CD8-positive, alpha-beta memory T cell (primary cell): ENCODE measurements at regions of chr6 and their contacts with region 1.

Region 1: GRCh38 chr6:42104095-42104806 is 38.2 kb downstream of the C6orf132 start:
- DNase-seq: peak; percentile 57 to 78 (median 70)
- H3K4me3 ChIP-seq: peak overlapping the region; percentile 66
- H3K4me3 Mint-ChIP-seq: peak overlapping the region; percentile 65 to 85 (median 71)
- H3K27ac ChIP-seq: peak overlapping the region; percentile 51
- H3K27ac Mint-ChIP-seq: peak overlapping the region in 4 of 8 donors; percentile 17 to 55 (median 44)
- H3K4me1 ChIP-seq: peaks cover 6% of the 10 kb centered on the region
- H3K4me1 Mint-ChIP-seq: peaks cover 7 to 14% (median 7%) of the 10 kb centered on the region in 3 donors
- H3K27me3 ChIP-seq: no peaks in the 10 kb centered on the region
- H3K27me3 Mint-ChIP-seq: no peaks in the 10 kb centered on the region

Region 2: DNA sequence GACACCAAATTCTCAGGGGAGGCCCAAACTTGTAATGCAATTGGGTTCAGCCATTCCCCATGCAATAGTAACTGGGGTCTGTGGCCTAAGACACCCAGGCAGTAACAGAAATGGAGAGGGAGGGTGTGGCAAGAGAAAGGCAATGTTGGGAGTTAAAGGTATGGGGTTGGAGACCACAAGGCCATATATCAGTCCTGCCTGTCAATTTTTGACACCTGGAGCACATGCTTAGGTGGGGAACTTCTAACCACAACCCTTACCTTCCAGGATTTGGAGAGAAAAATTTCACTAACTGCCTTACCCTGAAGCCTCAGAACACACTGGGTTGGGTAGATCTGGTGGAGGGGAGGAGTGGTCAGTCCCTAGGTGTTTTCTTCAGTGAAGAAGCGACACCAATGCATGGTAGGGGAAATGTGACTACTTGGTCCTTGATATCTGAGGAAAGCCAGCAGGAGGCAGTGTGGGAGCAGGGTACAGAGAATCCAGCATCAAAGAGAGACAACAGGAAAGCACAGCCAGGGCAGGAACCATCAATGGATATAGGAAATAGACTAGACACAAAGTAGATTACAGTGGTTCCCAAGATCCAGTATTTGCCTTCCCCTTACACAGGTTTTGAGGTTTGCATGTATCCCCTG is 202.2 kb before region 1 on chr6:
- CTCF ChIA-PET with region 1: interaction called, 15 read pairs
- POLR2A ChIA-PET with region 1: no interaction called
- DNase-seq: peak; percentile 37 to 71 (median 51)
- H3K4me3 ChIP-seq: no peak overlapping the region
- H3K4me3 Mint-ChIP-seq: no peak overlapping the region
- H3K27ac ChIP-seq: no peak overlapping the region
- H3K27ac Mint-ChIP-seq: peak overlapping the region in 5 of 8 donors; percentile 11 to 78 (median 47)
- H3K4me1 ChIP-seq: peaks cover 13% of the 10 kb centered on the region
- H3K4me1 Mint-ChIP-seq: peaks cover 16 to 22% (median 18%) of the 10 kb centered on the region in 3 donors
- H3K27me3 ChIP-seq: no peaks in the 10 kb centered on the region
- H3K27me3 Mint-ChIP-seq: no peaks in the 10 kb centered on the region

Region 3: DNA sequence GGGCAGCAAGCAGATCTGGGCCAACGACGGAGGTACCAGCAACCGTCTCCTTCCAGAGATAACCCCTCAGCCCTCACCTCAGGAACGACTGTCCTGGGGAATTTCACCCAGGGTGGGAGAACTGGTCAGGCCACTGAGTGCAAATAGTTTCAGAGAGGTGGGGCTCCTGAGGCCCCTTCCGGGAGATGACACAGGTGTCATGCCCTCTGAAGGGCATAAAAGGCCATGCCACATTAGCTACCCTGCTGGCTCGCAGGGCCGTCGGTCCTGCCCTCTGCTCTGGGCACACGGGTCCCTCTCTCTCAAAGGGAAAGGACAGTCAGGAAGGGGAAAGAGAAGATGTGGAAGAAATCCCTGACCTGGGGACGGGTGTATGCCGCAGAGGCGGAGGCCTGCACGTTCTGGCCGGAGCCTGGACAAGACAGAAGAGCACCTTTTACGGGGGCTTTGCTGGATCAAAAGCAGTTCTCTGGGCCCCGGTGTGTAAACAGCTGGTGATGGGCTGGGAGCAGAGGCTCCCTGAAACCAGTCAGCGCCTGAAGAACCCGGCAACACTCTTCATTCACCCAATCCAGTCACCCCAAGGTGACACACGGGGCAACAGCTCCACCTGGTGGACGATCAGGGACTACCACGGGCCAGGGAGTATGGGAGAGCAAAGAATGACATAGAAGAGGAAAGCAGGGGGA is 60.3 kb before region 1 on chr6:
- CTCF ChIA-PET with region 1: interaction called, 23 read pairs
- POLR2A ChIA-PET with region 1: no interaction called
- DNase-seq: peak; percentile 83 to 92 (median 88)
- H3K4me3 ChIP-seq: peak overlapping the region; percentile 63
- H3K4me3 Mint-ChIP-seq: peak overlapping the region; percentile 78 to 98 (median 89)
- H3K27ac ChIP-seq: no peak overlapping the region
- H3K27ac Mint-ChIP-seq: peak overlapping the region; percentile 67 to 97 (median 88)
- H3K4me1 ChIP-seq: peaks cover 80% of the 10 kb centered on the region
- H3K4me1 Mint-ChIP-seq: peaks cover 71 to 92% (median 82%) of the 10 kb centered on the region in 3 donors
- H3K27me3 ChIP-seq: no peaks in the 10 kb centered on the region
- H3K27me3 Mint-ChIP-seq: peaks cover 0 to 2% of the 10 kb centered on the region in 2 donors

Region 4: GRCh38 chr6:42086046-42087035 is 17.9 kb before region 1 on chr6:
- CTCF ChIA-PET with region 1: interaction called, 29 read pairs
- POLR2A ChIA-PET with region 1: no interaction called
- DNase-seq: no peak
- H3K4me3 ChIP-seq: no peak overlapping the region
- H3K4me3 Mint-ChIP-seq: no peak overlapping the region
- H3K27ac ChIP-seq: no peak overlapping the region
- H3K27ac Mint-ChIP-seq: peak overlapping the region in 2 of 8 donors; percentile 76 to 81
- H3K4me1 ChIP-seq: no peaks in the 10 kb centered on the region
- H3K4me1 Mint-ChIP-seq: peaks cover 0 to 3% (median 0%) of the 10 kb centered on the region in 3 donors
- H3K27me3 ChIP-seq: no peaks in the 10 kb centered on the region
- H3K27me3 Mint-ChIP-seq: no peaks in the 10 kb centered on the region

Region 5: GRCh38 chr6:42118162-42119001 is 14.1 kb after region 1 on chr6:
- CTCF ChIA-PET with region 1: interaction called, 16 read pairs
- POLR2A ChIA-PET with region 1: no interaction called
- DNase-seq: no peak
- H3K4me3 ChIP-seq: no peak overlapping the region
- H3K4me3 Mint-ChIP-seq: no peak overlapping the region
- H3K27ac ChIP-seq: no peak overlapping the region
- H3K27ac Mint-ChIP-seq: no peak overlapping the region
- H3K4me1 ChIP-seq: no peaks in the 10 kb centered on the region
- H3K4me1 Mint-ChIP-seq: no peaks in the 10 kb centered on the region
- H3K27me3 ChIP-seq: no peaks in the 10 kb centered on the region
- H3K27me3 Mint-ChIP-seq: peaks cover 3 to 14% of the 10 kb centered on the region in 2 donors

Region 6: GRCh38 chr6:42163981-42164380 is 59.7 kb after region 1 on chr6:
- CTCF ChIA-PET with region 1: interaction called, 13 read pairs
- POLR2A ChIA-PET with region 1: no interaction called
- DNase-seq: no peak
- H3K4me3 ChIP-seq: no peak overlapping the region
- H3K4me3 Mint-ChIP-seq: no peak overlapping the region
- H3K27ac ChIP-seq: no peak overlapping the region
- H3K27ac Mint-ChIP-seq: no peak overlapping the region
- H3K4me1 ChIP-seq: peaks cover 5% of the 10 kb centered on the region
- H3K4me1 Mint-ChIP-seq: peaks cover 0 to 3% (median 1%) of the 10 kb centered on the region in 3 donors
- H3K27me3 ChIP-seq: no peaks in the 10 kb centered on the region
- H3K27me3 Mint-ChIP-seq: peaks cover 20 to 23% of the 10 kb centered on the region in 2 donors

Region 7: DNA sequence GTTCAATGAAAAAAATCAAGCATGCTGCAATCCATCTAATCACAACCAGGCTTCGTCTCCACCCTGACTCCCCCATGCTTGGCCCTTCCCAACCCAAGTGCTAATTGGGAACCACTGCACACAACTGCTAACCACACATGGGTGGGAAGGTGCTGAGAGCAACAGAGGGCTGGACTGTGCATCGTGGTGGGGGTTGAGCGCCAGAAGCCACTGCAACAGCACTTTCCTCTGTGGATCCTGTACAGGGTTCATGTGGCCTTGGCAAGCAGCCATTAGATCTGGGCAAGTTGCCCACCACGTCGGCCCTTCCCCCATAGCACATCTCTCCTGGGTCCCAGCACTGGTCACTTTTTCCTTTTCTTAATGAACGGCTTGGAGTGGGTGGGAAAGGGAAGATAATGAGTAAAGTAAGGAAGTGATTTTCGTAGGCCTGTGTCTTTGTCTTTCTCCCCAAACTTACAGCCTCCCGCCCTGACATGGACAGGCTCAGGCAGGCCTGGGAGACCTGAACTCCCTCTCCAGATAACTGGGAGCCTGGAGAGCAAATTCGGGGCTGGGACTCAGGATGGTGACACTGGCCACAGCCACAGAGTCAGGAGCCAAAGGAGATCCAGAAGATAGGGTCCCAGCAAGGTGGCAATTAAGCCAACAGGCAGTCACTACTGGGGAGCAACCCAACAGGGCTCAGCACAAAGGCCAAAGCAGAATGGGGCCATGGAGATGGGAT is 147.8 kb after region 1 on chr6:
- CTCF ChIA-PET with region 1: no interaction called
- POLR2A ChIA-PET with region 1: no interaction called
- DNase-seq: no peak
- H3K4me3 ChIP-seq: no peak overlapping the region
- H3K4me3 Mint-ChIP-seq: no peak overlapping the region
- H3K27ac ChIP-seq: no peak overlapping the region
- H3K27ac Mint-ChIP-seq: peak overlapping the region in 6 of 8 donors; percentile 21 to 84 (median 54)
- H3K4me1 ChIP-seq: no peaks in the 10 kb centered on the region
- H3K4me1 Mint-ChIP-seq: peaks cover 0 to 14% (median 3%) of the 10 kb centered on the region in 3 donors
- H3K27me3 ChIP-seq: no peaks in the 10 kb centered on the region
- H3K27me3 Mint-ChIP-seq: peaks cover 0 to 1% of the 10 kb centered on the region in 2 donors